Stomach (tissue), 19 donors: ENCODE measurements at regions of chr4 and their contacts with region 1.

Region 1: GRCh38 chr4:87853108-87853507 is 20.3 kb downstream of the MEPE start:
- DNase-seq: peak in 1 of 2 donors; percentile 79
- H3K4me3 ChIP-seq: no peak overlapping the region
- H3K27ac ChIP-seq: no peak overlapping the region
- H3K4me1 ChIP-seq: peaks cover 0 to 12% (median 7%) of the 10 kb centered on the region in 4 donors
- H3K27me3 ChIP-seq: peaks cover 0 to 7% (median 0%) of the 10 kb centered on the region in 3 donors
- CTCF ChIP-seq: peak in 3 of 7 experiments; percentile 18 to 33 (median 19)
- EP300 ChIP-seq: no peak
- POLR2A ChIP-seq: no peak

Region 2: DNA sequence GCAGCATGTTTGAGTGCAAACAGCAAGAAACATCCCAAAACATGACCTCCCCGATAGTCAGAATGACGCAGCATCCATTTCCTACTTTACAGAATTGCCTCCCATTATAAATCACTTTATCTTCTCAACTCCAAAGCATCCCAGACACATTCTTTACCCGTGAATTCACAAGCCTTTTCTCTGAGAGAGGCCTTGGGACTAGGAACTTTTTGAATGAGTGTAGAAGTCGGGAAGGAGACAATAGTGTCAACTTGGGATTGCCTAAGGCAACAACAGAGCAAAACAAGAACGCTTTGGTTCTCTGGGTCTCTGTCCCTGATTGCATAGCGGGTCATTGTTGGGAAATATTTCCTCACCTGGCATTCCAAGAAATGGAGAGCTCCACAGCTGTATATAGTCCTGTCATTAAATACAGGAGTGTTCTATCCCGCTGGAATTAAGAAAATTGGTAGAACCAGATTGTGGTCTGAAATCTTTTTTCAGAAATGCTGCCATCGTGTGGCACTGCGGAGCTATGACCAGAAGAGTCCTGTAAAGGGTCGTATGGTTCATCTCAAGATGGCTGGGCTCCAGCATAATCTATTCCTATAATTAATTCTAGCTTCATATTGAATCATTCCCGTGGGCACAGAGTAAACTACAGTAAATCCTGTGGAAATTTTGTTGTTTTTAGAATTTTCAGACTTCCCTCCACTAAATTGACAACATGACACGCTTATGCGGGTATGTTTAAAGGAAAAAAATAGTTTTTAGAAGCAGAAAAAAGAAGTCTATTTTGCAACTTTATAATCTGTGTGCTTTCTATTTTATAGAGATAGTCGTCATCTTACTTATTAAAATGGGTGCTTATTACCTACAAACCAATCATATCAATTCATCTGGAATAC is 120.4 kb after region 1 on chr4:
- intact Hi-C with region 1: loop called (anchors 10 kb)
- DNase-seq: peak; percentile 45 to 83
- H3K4me3 ChIP-seq: no peak overlapping the region
- H3K27ac ChIP-seq: no peak overlapping the region
- H3K4me1 ChIP-seq: peaks cover 0 to 13% (median 5%) of the 10 kb centered on the region in 4 donors
- H3K27me3 ChIP-seq: peaks cover 0 to 31% (median 7%) of the 10 kb centered on the region in 3 donors
- CTCF ChIP-seq: peak in 5 of 7 experiments; percentile 27 to 77 (median 74)
- EP300 ChIP-seq: no peak
- POLR2A ChIP-seq: no peak

Region 3: GRCh38 chr4:88204882-88205281 is 351.8 kb after region 1 on chr4:
- intact Hi-C with region 1: loop called (anchors 10 kb)
- DNase-seq: no peak
- H3K4me3 ChIP-seq: no peak overlapping the region
- H3K27ac ChIP-seq: peak overlapping the region in 1 of 5 donors; percentile 25
- H3K4me1 ChIP-seq: peaks cover 0 to 6% (median 1%) of the 10 kb centered on the region in 4 donors
- H3K27me3 ChIP-seq: no peaks in the 10 kb centered on the region
- CTCF ChIP-seq: no peak
- EP300 ChIP-seq: no peak
- POLR2A ChIP-seq: no peak